ENCODE measurements at regions of chr7 and their contacts with region 1.

Region 1: DNA sequence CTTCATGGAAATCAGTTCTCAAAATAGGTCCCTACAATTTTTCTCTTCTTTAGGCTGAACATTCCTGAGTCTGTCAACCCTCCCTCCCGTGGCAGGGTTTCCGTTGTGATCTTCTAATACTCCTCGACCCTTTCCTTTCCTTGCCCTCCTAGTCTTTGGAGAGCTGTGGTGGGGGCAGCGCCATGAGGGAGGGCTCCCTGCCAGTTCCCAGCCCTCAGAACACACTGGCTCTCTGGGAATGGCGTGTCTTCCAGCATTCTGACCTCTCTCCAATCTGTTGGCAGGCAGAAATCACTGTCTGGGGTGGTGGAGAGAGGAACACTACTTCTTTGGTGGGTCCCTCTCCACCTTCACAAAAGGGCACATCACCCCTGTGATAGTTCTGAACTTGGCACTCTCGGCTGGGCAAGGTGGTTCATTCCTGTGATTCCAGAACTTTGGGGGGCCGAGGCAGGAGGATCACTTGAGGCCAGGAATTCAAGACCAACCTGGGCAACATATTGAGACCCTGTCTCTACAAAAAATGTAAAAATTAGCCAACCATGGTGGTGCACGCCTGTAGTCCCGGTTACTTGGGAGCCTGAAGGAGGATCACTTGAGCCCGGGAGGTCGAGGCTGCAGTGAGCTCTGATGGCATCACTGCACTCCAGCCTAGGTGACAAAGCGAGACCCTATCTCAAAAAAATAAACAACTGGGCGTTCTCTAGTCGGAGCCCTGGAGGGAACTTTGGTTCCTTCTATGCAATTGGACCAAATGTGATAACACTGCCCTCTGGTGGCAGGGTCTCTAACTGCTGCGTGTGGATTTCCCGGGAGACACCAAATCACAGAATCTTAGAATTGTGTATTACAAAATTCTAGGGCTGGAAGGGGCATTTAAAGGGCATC is 13.1 kb upstream of the ARPC1A start:
- DNase-seq: peak; percentile 60
- ATAC-seq: peak; percentile 85
- H3K4me3 ChIP-seq: no peak overlapping the region
- H3K27ac ChIP-seq: peak overlapping the region; percentile 44
- H3K4me1 ChIP-seq: peaks cover 6% of the 10 kb centered on the region; the same call in 1 of the 2 replicates
- H3K27me3 ChIP-seq: no peaks in the 10 kb centered on the region
- CTCF ChIP-seq: peak; percentile 93

Region 2: DNA sequence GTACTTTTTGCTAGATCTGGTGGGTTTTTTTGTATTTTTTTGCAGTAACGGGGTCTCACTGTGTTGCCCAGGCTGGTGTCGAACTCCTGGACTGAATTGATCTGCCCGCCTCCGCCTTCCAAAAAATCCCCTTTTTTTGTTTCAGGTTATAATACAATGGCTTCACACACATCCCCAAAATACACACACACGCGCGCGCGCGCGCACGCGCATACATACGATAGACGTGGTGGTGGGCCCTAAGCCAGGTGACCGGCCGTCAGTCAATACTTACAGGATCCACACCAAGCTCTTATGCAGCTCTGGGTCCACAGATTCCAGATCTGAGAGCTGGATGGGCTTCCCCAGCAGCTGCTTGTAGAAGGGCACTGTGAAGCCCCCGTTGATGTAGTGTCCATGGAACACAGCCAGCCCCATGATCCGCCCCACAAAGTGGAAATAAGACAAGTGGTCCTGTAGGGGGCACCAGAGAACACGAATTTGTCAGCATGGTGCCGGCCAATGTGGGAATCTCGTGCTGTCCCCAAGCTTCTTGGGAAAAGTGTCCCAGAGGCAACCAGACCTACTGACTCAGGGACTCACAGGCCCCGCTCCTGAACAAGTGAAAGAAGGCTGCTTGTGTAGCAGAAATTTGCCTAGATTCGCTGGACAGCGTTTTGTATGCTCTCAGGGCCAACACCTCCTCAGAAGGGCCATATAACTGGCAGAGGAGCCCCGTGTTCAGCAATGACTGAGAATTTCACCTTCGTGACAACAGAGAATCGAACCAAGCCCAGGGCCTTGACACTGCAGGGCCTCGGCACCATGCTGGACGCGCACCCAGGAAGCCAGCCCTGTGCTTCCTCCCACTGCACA is 272.2 kb before region 1 on chr7:
- CTCF ChIA-PET with region 1: interaction called, 3 read pairs
- POLR2A ChIA-PET with region 1: no interaction called
- in situ Hi-C with region 1: no loop called
- intact Hi-C with region 1: loop called (anchors 1 kb)
- DNase-seq: peak; percentile 78
- ATAC-seq: peak; percentile 84
- H3K4me3 ChIP-seq: no peak overlapping the region
- H3K27ac ChIP-seq: peak overlapping the region; percentile 72
- H3K4me1 ChIP-seq: peaks cover 24% of the 10 kb centered on the region
- H3K27me3 ChIP-seq: no peaks in the 10 kb centered on the region
- CTCF ChIP-seq: peak; percentile 86

Region 3: DNA sequence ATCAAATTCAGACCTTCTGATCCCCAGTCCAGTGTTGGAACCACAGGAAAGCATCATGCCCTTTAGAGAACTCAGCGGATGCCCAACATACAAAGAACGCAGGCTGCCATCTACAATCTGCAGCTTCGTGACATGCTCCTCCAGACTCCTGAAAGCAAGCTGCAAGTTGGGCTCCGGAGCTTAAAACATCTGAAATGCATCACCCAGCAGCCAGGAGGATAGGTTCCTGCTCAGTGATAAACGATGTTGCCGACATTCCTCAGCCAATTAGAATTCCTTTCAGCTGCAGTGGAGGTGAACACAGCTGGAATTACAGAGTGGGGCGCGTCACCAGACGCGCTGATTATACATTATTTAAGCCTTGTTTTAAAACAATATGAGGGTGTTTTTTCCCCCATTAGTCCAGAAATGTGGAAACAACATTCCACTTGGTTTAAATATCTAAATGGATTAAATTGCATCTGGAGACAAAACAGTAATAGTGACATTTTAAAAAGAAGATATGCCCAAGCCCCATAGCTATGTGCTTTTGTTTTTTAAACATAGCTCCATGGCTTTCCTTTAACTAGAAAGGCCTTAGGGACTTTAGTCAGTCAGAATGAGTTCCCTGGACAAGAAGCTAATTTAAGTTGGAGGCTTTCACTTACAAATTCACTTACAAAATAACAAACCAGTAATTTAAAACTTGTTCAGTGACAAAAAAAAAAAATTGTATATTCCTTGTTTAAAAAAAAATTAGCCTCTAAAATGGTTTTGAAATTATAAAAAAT is 175.0 kb before region 1 on chr7:
- CTCF ChIA-PET with region 1: no interaction called
- POLR2A ChIA-PET with region 1: no interaction called
- in situ Hi-C with region 1: no loop called
- intact Hi-C with region 1: loop called (anchors 5 kb)
- DNase-seq: no peak
- ATAC-seq: peak; percentile 18; the same call in 1 of the 2 replicates
- H3K4me3 ChIP-seq: peak overlapping the region; percentile 21 to 47
- H3K27ac ChIP-seq: peak overlapping the region; percentile 84
- H3K4me1 ChIP-seq: peaks cover 84% of the 10 kb centered on the region
- H3K27me3 ChIP-seq: no peaks in the 10 kb centered on the region
- CTCF ChIP-seq: no peak

Region 4: DNA sequence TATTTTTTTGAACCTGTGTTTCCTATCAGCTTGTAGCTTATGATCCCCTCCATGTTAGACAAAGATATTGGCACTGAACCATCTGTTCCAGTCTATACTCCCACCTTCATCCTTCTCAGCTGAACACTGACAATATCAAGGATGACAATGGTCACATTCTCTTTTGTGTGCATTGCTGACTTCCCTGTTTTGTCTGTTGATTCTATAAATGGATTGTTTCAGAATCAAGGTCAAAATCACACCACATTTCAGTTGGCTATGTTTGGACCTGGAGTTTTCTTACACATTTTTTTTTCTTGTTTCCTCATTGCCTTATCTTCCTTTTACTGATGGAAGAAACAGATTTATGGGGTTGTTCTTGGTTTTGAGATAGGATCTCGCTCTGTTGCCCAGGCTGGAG is 157.3 kb before region 1 on chr7:
- CTCF ChIA-PET with region 1: no interaction called
- POLR2A ChIA-PET with region 1: no interaction called
- in situ Hi-C with region 1: no loop called
- intact Hi-C with region 1: loop called (anchors 5 kb)
- DNase-seq: no peak
- ATAC-seq: no peak
- H3K4me3 ChIP-seq: no peak overlapping the region
- H3K27ac ChIP-seq: no peak overlapping the region
- H3K4me1 ChIP-seq: no peaks in the 10 kb centered on the region
- H3K27me3 ChIP-seq: no peaks in the 10 kb centered on the region
- CTCF ChIP-seq: no peak

Measured in Panc1 (cell line).